GM12878 (cell line): ENCODE measurements at regions of chr2 and their contacts with region 1.

Region 1: DNA sequence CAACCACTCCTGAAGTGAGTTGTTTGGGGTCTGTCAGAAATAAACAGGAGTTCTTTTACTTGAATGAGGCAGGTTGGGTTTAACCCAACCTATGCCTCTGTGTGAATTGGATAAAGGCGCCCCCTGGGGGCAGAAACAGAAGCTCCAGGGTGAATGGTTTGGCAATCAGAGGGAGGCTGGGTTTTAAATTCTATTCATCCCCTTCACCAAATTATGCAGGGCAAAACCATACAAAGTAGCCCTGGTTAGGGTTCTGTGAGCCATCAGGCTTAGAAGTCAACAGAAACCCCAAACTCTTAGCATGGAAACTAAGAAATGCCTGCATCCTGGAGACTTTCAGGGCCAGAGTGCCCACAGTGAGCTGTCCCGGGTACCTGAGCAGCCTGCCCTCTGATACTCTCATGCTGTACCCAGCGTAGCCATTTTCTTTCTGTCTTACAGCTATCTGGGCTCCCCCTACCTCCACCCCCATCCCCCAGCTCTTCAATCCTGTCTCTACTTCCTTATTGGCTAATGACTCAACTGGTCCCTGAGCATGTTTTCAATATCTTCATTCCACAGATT is 241.5 kb downstream of the ICOS start:
- DNase-seq: peak; percentile 1
- ATAC-seq: peak; percentile 90
- H3K4me3 ChIP-seq: no peak overlapping the region
- H3K27ac ChIP-seq: no peak overlapping the region
- H3K4me1 ChIP-seq: no peaks in the 10 kb centered on the region
- H3K27me3 ChIP-seq: no peaks in the 10 kb centered on the region
- CTCF ChIP-seq: peak; percentile 54 to 73 (median 62)
- EP300 ChIP-seq: no peak
- POLR2A ChIP-seq: no peak
- RAD21 ChIP-seq: peak; percentile 54

Region 2: GRCh38 chr2:203814661-203815540 is 363.2 kb before region 1 on chr2:
- CTCF ChIA-PET with region 1: no interaction called
- POLR2A ChIA-PET with region 1: no interaction called
- RAD21 ChIA-PET with region 1: no interaction called
- SMC1A ChIA-PET with region 1: no interaction called
- in situ Hi-C with region 1: no loop called
- intact Hi-C with region 1: no loop called
- DNase-seq: no peak
- ATAC-seq: peak; percentile 91
- H3K4me3 ChIP-seq: no peak overlapping the region
- H3K27ac ChIP-seq: no peak overlapping the region
- H3K4me1 ChIP-seq: peaks cover 6% of the 10 kb centered on the region
- H3K27me3 ChIP-seq: peaks cover 0 to under 1% of the 10 kb centered on the region in 2 experiments; a peak in 1 of 4 replicates
- CTCF ChIP-seq: peak; percentile 55 to 80 (median 66); a peak in 5 of 6 replicates
- EP300 ChIP-seq: no peak
- POLR2A ChIP-seq: no peak
- RAD21 ChIP-seq: peak; percentile 89

Region 3: GRCh38 chr2:203928849-203929248 is 249.2 kb before region 1 on chr2:
- CTCF ChIA-PET with region 1: interaction called, 4 read pairs
- POLR2A ChIA-PET with region 1: no interaction called
- RAD21 ChIA-PET with region 1: no interaction called
- SMC1A ChIA-PET with region 1: no interaction called
- in situ Hi-C with region 1: no loop called
- intact Hi-C with region 1: loop called (anchors 10 kb)
- DNase-seq: no peak
- ATAC-seq: no peak; the same call in 2 of the 3 replicates
- H3K4me3 ChIP-seq: no peak overlapping the region
- H3K27ac ChIP-seq: no peak overlapping the region
- H3K4me1 ChIP-seq: no peaks in the 10 kb centered on the region
- H3K27me3 ChIP-seq: no peaks in the 10 kb centered on the region
- CTCF ChIP-seq: peak in 2 of 3 experiments; percentile 14 to 21; a peak in 3 of 6 replicates
- EP300 ChIP-seq: no peak
- POLR2A ChIP-seq: no peak
- RAD21 ChIP-seq: peak; percentile 32; the same call in 1 of the 2 replicates

Region 4: DNA sequence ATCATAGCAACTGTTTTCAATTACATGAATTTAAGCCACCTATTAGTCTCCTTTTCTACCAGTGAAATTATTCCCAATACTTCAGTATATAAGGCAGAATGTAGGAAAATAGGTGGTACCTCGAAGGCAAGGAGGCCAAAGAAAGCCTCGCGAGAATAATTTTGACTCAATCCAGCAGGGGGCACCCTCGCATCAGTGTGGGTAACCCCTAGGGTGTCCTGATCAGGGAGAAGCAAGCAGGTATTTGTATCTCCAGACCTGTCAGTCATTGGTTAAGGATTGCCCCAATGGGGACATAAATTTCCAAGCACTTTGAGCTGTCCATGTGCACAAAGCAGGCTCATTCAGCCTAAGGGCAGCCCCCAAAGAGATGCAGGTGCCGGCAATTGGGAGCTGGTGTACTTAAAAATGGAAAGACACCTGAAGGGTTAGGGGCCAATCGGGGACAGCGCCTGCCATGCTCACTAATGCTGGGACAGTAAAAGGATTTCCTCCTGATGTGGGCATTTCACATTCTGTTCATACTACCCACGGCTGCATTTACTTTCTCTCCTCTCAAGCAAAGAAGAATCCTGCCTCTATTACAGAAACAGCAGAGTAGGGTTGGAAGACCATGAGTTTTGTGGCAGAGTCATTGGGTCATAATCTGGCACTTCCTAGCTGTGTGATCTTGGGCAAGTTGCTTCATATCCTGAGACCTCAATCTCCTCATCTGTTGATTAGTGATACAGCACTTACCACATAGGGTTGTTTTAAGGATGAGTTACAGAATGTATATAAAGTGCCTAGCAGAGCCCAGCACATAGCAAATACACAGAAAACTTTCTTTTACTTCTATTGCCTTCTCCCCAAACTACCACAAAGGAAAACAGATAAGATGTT is 105.4 kb before region 1 on chr2:
- CTCF ChIA-PET with region 1: interaction called, 18 read pairs
- POLR2A ChIA-PET with region 1: no interaction called
- RAD21 ChIA-PET with region 1: no interaction called
- SMC1A ChIA-PET with region 1: no interaction called
- in situ Hi-C with region 1: no loop called
- intact Hi-C with region 1: loop called (anchors 1 kb)
- DNase-seq: no peak
- ATAC-seq: peak; percentile 76
- H3K4me3 ChIP-seq: no peak overlapping the region
- H3K27ac ChIP-seq: no peak overlapping the region
- H3K4me1 ChIP-seq: no peaks in the 10 kb centered on the region
- H3K27me3 ChIP-seq: peaks cover 0 to 2% of the 10 kb centered on the region in 2 experiments; a peak in 1 of 4 replicates
- CTCF ChIP-seq: peak; percentile 47 to 60 (median 52)
- EP300 ChIP-seq: no peak
- POLR2A ChIP-seq: no peak
- RAD21 ChIP-seq: peak; percentile 56

Region 5: DNA sequence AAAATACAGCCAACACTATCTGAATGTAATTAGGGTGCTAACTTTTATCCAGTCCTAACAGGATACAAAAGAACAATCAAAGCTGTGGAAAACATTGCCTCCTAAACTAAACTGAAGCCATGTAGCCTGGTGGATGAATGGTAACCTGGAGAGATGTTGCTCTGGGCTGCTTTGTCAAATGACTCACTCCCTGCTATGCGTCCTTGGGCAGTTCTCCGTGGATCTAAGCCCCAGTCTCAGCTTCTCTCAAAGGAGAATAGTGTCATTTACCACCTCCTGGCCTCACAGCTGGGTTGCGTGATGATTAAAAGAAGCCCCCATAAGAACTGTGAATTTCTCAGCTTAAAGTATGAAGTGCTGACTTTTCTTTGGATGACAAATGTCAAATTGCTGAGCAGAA is 37.8 kb before region 1 on chr2:
- CTCF ChIA-PET with region 1: interaction called, 22 read pairs
- POLR2A ChIA-PET with region 1: no interaction called
- RAD21 ChIA-PET with region 1: interaction called, 3 read pairs
- SMC1A ChIA-PET with region 1: interaction called, 4 read pairs
- in situ Hi-C with region 1: no loop called
- intact Hi-C with region 1: loop called (anchors 1 kb)
- DNase-seq: no peak
- ATAC-seq: no peak
- H3K4me3 ChIP-seq: no peak overlapping the region
- H3K27ac ChIP-seq: no peak overlapping the region
- H3K4me1 ChIP-seq: no peaks in the 10 kb centered on the region
- H3K27me3 ChIP-seq: no peaks in the 10 kb centered on the region; a peak in 1 of 4 replicates
- CTCF ChIP-seq: no peak
- EP300 ChIP-seq: no peak
- POLR2A ChIP-seq: no peak
- RAD21 ChIP-seq: no peak

Region 6: GRCh38 chr2:204159526-204159925 is 18.5 kb before region 1 on chr2:
- CTCF ChIA-PET with region 1: interaction called, 14 read pairs
- POLR2A ChIA-PET with region 1: no interaction called
- RAD21 ChIA-PET with region 1: interaction called, 3 read pairs
- SMC1A ChIA-PET with region 1: interaction called, 6 read pairs
- in situ Hi-C with region 1: no loop called
- intact Hi-C with region 1: no loop called
- DNase-seq: no peak
- ATAC-seq: no peak
- H3K4me3 ChIP-seq: no peak overlapping the region
- H3K27ac ChIP-seq: no peak overlapping the region
- H3K4me1 ChIP-seq: no peaks in the 10 kb centered on the region
- H3K27me3 ChIP-seq: no peaks in the 10 kb centered on the region; a peak in 1 of 4 replicates
- CTCF ChIP-seq: no peak
- EP300 ChIP-seq: no peak
- POLR2A ChIP-seq: no peak
- RAD21 ChIP-seq: no peak

Region 7: GRCh38 chr2:204260162-204260877 is 82.3 kb after region 1 on chr2:
- CTCF ChIA-PET with region 1: interaction called, 10 read pairs
- POLR2A ChIA-PET with region 1: no interaction called
- RAD21 ChIA-PET with region 1: no interaction called
- SMC1A ChIA-PET with region 1: no interaction called
- in situ Hi-C with region 1: no loop called
- intact Hi-C with region 1: no loop called
- DNase-seq: no peak
- ATAC-seq: peak; percentile 76
- H3K4me3 ChIP-seq: no peak overlapping the region
- H3K27ac ChIP-seq: no peak overlapping the region
- H3K4me1 ChIP-seq: no peaks in the 10 kb centered on the region
- H3K27me3 ChIP-seq: no peaks in the 10 kb centered on the region
- CTCF ChIP-seq: peak; percentile 51 to 55 (median 54); a peak in 5 of 6 replicates
- EP300 ChIP-seq: no peak
- POLR2A ChIP-seq: no peak
- RAD21 ChIP-seq: 0 out of 2 replicates have a peak, but pooled peaks have one; percentile 30

Region 8: GRCh38 chr2:204272089-204272488 is 94.0 kb after region 1 on chr2:
- CTCF ChIA-PET with region 1: no interaction called
- POLR2A ChIA-PET with region 1: no interaction called
- RAD21 ChIA-PET with region 1: no interaction called
- SMC1A ChIA-PET with region 1: no interaction called
- in situ Hi-C with region 1: no loop called
- intact Hi-C with region 1: no loop called
- DNase-seq: no peak
- ATAC-seq: no peak
- H3K4me3 ChIP-seq: no peak overlapping the region
- H3K27ac ChIP-seq: no peak overlapping the region
- H3K4me1 ChIP-seq: no peaks in the 10 kb centered on the region
- H3K27me3 ChIP-seq: no peaks in the 10 kb centered on the region
- CTCF ChIP-seq: no peak
- EP300 ChIP-seq: no peak
- POLR2A ChIP-seq: no peak
- RAD21 ChIP-seq: no peak